GM12878 (cell line): ENCODE measurements at regions of chr5 and their contacts with region 1.

Region 1: DNA sequence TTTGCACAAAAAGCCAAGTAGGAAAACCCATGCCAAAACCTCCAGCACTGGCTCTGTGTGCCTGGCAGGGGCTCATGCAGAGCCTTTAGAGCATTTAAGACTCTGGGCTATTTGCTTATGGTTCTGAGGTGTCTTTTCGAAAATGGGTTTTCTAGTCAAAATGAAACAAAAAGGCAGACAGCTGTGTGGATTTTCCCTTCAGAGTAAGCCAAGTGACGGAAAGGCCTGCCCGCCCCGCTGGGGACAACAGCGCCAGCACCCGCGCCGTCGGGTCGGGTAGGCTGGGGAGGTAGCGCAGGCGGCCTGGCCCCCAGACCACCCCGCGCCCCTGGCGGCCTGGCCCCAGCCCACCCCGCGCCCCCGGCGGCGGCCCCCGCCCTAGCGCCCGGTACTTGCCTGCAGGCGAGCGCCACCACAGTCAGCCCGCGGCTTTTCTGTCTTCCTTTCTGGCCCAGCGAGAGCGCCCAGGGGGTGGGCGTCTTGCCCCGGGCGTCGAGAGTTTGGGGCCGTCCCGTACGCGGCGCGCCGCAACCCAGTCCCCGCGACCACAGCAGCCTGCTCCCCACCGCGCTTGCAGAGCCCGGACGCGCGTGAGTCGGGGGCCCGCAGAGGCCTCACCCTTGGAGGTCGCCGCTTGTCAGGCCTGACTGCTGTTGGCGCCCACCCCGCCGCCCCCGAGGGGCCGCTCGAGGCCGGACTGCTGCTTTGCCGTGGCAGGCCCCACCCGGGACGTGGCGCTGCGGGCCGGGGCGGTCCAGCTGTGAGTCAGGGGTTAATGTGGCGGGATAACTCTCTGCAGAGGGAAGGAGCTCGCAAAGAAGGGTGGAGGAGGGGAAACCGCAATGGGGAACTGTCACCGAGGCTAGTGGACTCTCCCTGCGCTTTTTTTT is at the start of gene TICAM2:
- DNase-seq: peak; percentile 77
- ATAC-seq: peak; percentile 87
- H3K4me3 ChIP-seq: peak within 1 kb of the TSS; percentile 85
- H3K27ac ChIP-seq: peak within 1 kb of the TSS; percentile 94
- H3K4me1 ChIP-seq: peaks cover 22% of the 10 kb centered on the region
- H3K27me3 ChIP-seq: no peaks in the 10 kb centered on the region
- CTCF ChIP-seq: peak in 2 of 3 experiments; percentile 4 to 21; a peak in 1 of 6 replicates
- EP300 ChIP-seq: peak; percentile 66 to 76
- POLR2A ChIP-seq: peak; percentile 88
- RAD21 ChIP-seq: no peak
- polyA plus RNA-seq, gene TICAM2: 1.8 to 2.3 TPM

Region 2: DNA sequence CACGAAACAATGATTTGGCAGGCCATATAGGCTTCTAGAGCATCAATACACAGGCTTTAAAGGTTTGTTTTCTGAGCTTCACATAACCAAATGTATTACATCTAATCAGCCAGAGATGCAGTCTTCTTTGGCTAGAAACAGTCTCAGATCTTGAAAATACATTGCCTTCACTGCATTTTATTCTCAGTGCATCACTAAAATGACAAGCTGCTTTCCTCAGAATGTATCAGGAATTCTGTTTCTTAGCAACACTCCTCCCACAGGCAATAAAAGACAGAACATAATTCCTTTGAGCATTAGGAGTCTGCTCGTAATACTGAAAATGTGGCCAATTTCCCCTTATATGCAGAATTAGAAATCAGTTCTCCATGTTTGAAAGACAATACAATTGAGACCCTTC is 94.3 kb before region 1 on chr5:
- CTCF ChIA-PET with region 1: no interaction called
- POLR2A ChIA-PET with region 1: no interaction called
- RAD21 ChIA-PET with region 1: no interaction called
- SMC1A ChIA-PET with region 1: no interaction called
- in situ Hi-C with region 1: no loop called
- intact Hi-C with region 1: no loop called
- DNase-seq: no peak
- ATAC-seq: no peak
- H3K4me3 ChIP-seq: no peak overlapping the region
- H3K27ac ChIP-seq: no peak overlapping the region
- H3K4me1 ChIP-seq: no peaks in the 10 kb centered on the region
- H3K27me3 ChIP-seq: no peaks in the 10 kb centered on the region
- CTCF ChIP-seq: no peak
- EP300 ChIP-seq: no peak
- POLR2A ChIP-seq: no peak
- RAD21 ChIP-seq: no peak

Region 3: GRCh38 chr5:115616472-115616871 is 14.5 kb after region 1 on chr5:
- CTCF ChIA-PET with region 1: interaction called, 38 read pairs
- POLR2A ChIA-PET with region 1: interaction called, 10 read pairs
- RAD21 ChIA-PET with region 1: interaction called, 3 read pairs
- SMC1A ChIA-PET with region 1: interaction called, 21 read pairs
- in situ Hi-C with region 1: no loop called
- intact Hi-C with region 1: no loop called
- DNase-seq: no peak
- ATAC-seq: peak; percentile 35
- H3K4me3 ChIP-seq: no peak overlapping the region
- H3K27ac ChIP-seq: no peak overlapping the region
- H3K4me1 ChIP-seq: no peaks in the 10 kb centered on the region
- H3K27me3 ChIP-seq: no peaks in the 10 kb centered on the region
- CTCF ChIP-seq: no peak
- EP300 ChIP-seq: no peak
- POLR2A ChIP-seq: no peak
- RAD21 ChIP-seq: no peak